Naive thymus-derived CD4-positive, alpha-beta T cell (primary cell): ENCODE measurements at regions of chr17 and their contacts with region 1.

Region 1: DNA sequence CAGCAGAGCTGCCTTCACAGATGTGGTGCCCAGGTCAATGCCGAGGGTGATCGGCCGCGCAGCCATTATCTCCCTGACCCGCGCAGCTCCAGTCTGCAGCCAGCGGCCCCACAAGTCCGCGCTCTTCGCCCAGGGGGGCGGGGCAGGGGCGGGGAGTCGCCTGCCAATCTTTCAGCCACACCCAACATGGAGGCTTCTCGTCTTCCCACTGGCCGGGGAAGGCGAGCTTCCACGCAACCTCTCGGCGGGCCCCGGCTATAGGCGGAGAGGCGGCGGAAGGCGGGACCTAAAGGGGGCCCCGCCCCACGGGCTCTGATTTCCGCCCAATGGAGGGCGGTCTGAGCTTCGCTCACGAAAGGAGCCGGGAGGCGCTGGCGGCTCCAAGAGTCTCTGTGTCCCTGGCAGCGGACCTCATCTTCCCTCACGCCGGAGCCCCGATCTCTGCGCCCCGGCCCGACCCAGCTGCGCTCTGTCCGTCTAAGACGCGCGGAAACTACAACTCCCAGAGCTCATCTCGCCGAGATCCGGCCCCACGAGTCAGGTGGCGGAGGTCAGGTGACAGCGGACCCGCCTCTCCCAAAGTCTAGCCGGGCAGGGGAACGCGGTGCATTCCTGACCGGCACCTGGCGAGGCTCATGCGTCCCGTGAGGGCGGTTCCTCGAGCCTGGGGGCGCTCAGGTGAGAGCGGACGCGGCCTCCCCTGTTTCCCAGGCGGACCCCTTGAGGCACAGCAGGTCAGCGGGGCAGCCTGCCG is at the starts of genes CTNS and SHPK:
- DNase-seq: peak; percentile 90 to 95 (median 95)
- ATAC-seq: peak; percentile 98
- H3K4me3 ChIP-seq: peak within 1 kb of the TSS; percentile 97
- H3K4me3 Mint-ChIP-seq: peak within 1 kb of the TSS; percentile 86 to 99 (median 98)
- H3K27ac ChIP-seq: peak within 1 kb of the TSS; percentile 98
- H3K27ac Mint-ChIP-seq: peak within 1 kb of the TSS; percentile 96 to 100 (median 99)
- H3K4me1 ChIP-seq: peaks cover 0 to 3% of the 10 kb centered on the region in 2 donors
- H3K4me1 Mint-ChIP-seq: peaks cover 17 to 45% (median 29%) of the 10 kb centered on the region in 7 donors
- H3K27me3 ChIP-seq: no peaks in the 10 kb centered on the region
- H3K27me3 Mint-ChIP-seq: no peaks in the 10 kb centered on the region
- total RNA-seq, gene CTNS: 4.7 to 15.2 (median 8.8) TPM
- total RNA-seq, gene SHPK: 6.3 to 11.2 (median 10.8) TPM

Region 2: GRCh38 chr17:2786176-2786881 is 850.0 kb before region 1 on chr17:
- CTCF ChIA-PET with region 1: no interaction called
- POLR2A ChIA-PET with region 1: no interaction called
- intact Hi-C with region 1: loop called in 1 of 2 experiments (anchors 5 kb)
- DNase-seq: peak; percentile 79 to 93 (median 87)
- ATAC-seq: peak; percentile 99
- H3K4me3 ChIP-seq: no peak overlapping the region
- H3K4me3 Mint-ChIP-seq: peak overlapping the region in 7 of 10 donors; percentile 21 to 53 (median 42)
- H3K27ac ChIP-seq: no peak overlapping the region
- H3K27ac Mint-ChIP-seq: peak overlapping the region in 2 of 9 donors; percentile 10 to 52
- H3K4me1 ChIP-seq: peaks cover 3 to 23% of the 10 kb centered on the region in 2 donors
- H3K4me1 Mint-ChIP-seq: peaks cover 3 to 16% (median 10%) of the 10 kb centered on the region in 7 donors
- H3K27me3 ChIP-seq: no peaks in the 10 kb centered on the region
- H3K27me3 Mint-ChIP-seq: peaks cover 0 to 23% (median 0%) of the 10 kb centered on the region in 5 donors

Region 3: DNA sequence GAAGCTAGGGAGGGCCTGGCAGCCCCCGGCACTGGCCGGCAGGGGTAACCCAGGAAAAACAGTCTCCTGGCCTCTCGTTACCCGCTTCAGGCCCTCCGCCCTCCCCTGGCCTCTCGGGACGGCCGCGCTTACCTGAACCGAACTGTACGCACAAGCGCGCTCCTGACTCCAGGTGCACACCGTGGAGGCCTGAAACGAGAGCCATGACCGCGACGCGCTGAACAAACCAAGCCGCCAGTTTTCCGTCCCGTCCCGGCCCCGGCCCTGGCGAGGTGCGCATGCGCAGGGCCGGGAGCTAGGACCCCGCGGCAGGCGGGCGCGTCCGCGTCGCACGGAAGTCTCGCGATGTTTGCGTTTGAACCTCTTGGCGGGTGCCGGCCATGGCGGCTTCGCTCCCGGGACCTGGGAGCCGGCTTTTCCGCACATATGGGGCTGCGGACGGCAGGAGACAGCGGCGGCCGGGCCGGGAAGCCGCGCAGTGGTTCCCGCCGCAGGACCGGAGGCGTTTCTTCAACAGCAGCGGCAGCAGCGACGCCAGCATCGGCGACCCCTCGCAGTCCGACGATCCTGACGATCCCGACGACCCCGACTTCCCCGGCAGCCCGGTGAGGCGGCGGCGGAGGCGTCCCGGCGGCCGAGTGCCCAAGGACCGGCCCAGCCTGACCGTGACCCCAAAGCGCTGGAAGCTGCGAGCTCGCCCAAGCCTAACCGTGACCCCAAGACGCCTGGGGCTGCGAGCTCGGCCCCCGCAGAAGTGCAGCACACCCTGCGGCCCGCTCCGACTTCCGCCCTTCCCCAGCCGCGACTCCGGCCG is 87.4 kb after region 1 on chr17 and contains the start of gene HASPIN:
- CTCF ChIA-PET with region 1: interaction called, 4 read pairs
- POLR2A ChIA-PET with region 1: interaction called, 4 read pairs
- intact Hi-C with region 1: loop called in 1 of 2 experiments (anchors 1 kb)
- DNase-seq: peak; percentile 85 to 97 (median 92)
- ATAC-seq: peak; percentile 92
- H3K4me3 ChIP-seq: peak within 1 kb of the TSS; percentile 77
- H3K4me3 Mint-ChIP-seq: peak within 1 kb of the TSS; percentile 84 to 95 (median 92)
- H3K27ac ChIP-seq: peak within 1 kb of the TSS; percentile 83
- H3K27ac Mint-ChIP-seq: peak within 1 kb of the TSS; percentile 65 to 94 (median 86)
- H3K4me1 ChIP-seq: peaks cover 7 to 24% of the 10 kb centered on the region in 2 donors
- H3K4me1 Mint-ChIP-seq: peaks cover 21 to 55% (median 39%) of the 10 kb centered on the region in 7 donors
- H3K27me3 ChIP-seq: no peaks in the 10 kb centered on the region
- H3K27me3 Mint-ChIP-seq: no peaks in the 10 kb centered on the region
- total RNA-seq, gene HASPIN: 0.32 to 18.5 (median 0.35) TPM

Region 4: DNA sequence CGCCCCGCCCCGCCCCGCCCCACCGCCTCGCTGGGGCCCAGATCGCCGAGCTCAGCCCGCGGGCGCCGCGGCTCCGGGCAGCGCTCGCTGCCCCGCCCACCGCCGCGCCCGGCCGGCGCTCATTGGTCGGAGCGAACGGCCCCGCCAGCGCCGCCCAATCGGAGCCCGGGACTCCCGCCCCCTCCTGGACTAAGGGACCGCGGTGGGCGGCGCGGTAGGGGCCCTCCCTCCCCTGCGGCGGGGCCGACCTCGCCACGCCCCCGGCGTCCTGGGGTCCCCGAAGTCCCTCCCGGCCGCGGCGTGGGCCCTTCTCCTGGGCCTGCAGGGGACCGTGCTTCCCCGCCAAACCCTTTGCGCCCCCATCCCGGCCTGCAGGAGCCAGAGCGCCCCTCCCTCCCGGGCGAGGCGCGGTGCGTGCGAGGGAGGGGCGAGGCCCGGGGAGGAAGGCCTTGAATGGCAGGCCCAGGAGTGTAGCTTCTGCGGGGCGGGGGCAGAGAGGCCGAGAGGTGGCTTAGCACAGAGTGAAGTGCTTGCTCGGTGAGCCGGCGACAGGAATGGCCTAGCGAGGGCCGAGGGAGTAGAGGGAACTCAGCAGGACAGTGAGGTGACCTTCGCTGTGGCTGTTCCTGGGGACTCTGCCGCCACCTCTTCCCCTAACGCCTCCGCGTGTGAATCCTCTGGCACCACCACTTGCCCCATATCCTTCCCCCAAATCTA is 256.8 kb after region 1 on chr17 and contains the start of gene CAMKK1:
- CTCF ChIA-PET with region 1: no interaction called
- POLR2A ChIA-PET with region 1: no interaction called
- intact Hi-C with region 1: loop called in 1 of 2 experiments (anchors 1 kb)
- DNase-seq: peak; percentile 71 to 96 (median 85)
- ATAC-seq: peak; percentile 87
- H3K4me3 ChIP-seq: peak within 1 kb of the TSS; percentile 70
- H3K4me3 Mint-ChIP-seq: peak within 1 kb of the TSS; percentile 81 to 90 (median 86)
- H3K27ac ChIP-seq: peak within 1 kb of the TSS; percentile 77
- H3K27ac Mint-ChIP-seq: peak within 1 kb of the TSS; percentile 73 to 93 (median 88)
- H3K4me1 ChIP-seq: peaks cover 11 to 23% of the 10 kb centered on the region in 2 donors
- H3K4me1 Mint-ChIP-seq: peaks cover 23 to 45% (median 35%) of the 10 kb centered on the region in 7 donors
- H3K27me3 ChIP-seq: no peaks in the 10 kb centered on the region
- H3K27me3 Mint-ChIP-seq: peaks cover 0 to 7% (median 0%) of the 10 kb centered on the region in 5 donors
- total RNA-seq, gene CAMKK1: 4.8 to 12.5 (median 6.3) TPM

Region 5: DNA sequence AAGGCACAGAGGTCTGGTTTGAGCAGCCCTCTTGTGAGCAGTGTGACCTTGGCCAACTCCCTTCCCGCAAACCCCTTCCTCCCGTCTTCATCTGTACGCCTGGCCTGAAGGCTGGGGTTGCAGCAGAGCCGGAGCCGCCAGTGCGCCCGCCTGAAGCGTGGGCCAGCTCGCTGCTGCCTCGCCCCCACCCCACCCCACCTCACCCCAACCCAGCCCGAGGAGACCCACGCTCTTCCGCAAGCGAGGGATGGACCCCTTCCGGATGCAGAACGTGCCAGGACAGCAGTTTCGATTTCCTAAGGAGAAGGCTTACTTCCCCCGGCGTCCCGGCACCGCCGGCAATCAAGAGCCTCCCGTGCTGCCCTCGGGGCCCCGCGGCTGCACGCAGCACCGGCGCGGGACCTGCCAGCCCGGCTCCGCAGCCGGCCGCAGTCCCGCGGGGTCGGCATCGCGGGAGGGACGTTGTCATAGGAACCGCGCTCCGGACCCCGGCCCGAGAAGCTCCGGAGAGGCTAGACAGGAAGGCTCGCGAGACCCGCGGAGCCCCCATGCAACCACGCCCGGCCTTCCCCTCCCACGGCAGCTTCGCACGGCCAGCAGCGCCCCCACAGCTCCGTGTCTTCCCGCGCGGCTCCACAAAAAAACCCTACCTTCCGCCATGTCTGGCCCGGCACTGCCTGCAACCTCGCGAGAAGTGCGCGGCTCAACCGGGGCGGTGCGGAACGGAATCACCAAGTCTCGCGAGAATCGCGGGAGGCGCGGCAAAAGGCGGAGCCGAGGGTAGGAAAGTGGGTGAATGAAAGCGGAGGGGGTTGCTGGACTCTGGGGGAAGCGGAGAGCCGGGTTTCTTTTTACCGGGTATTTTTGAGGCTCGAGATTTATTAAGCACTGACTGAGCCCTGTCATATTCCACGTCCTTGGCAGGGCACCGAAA is 627.2 kb after region 1 on chr17 and contains the start of gene ANKFY1:
- CTCF ChIA-PET with region 1: no interaction called
- POLR2A ChIA-PET with region 1: no interaction called
- intact Hi-C with region 1: loop called in 1 of 2 experiments (anchors 5 kb)
- DNase-seq: peak; percentile 95 to 99 (median 97)
- ATAC-seq: peak; percentile 98
- H3K4me3 ChIP-seq: peak within 1 kb of the TSS; percentile 73
- H3K4me3 Mint-ChIP-seq: peak within 1 kb of the TSS; percentile 89 to 99 (median 94)
- H3K27ac ChIP-seq: peak within 1 kb of the TSS; percentile 94
- H3K27ac Mint-ChIP-seq: peak within 1 kb of the TSS; percentile 82 to 98 (median 95)
- H3K4me1 ChIP-seq: peaks cover 16 to 17% of the 10 kb centered on the region in 2 donors
- H3K4me1 Mint-ChIP-seq: peaks cover 27 to 49% (median 41%) of the 10 kb centered on the region in 7 donors
- H3K27me3 ChIP-seq: no peaks in the 10 kb centered on the region
- H3K27me3 Mint-ChIP-seq: no peaks in the 10 kb centered on the region
- total RNA-seq, gene ANKFY1: 52.4 to 84.5 (median 69.7) TPM